Breast epithelium (tissue), 4 donors: ENCODE measurements at regions of chr18 and their contacts with region 1.

Region 1: DNA sequence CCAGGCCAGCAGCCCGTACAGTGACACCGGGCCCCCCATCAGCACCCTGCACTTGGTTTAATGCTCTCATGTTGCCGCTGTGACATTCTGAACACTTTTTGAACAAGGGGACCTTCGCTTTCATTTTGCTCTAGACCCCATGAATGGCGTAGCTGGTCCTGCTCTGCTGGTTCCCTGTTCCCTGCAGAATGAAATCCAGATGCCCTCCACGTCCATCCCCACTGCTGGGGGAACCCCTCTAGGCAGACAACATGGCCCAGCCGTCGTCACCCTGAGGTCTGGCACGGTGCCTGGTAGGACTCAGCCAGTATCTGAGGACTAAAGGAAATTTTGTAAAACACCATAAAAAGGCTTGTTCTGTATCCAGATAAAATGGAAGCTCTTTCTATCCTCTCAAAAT is 128.6 kb downstream of the KCTD1 start:
- DNase-seq: no peak
- H3K4me3 ChIP-seq: no peak overlapping the region
- H3K27ac ChIP-seq: no peak overlapping the region
- H3K4me1 ChIP-seq: no peaks in the 10 kb centered on the region
- H3K27me3 ChIP-seq: no peaks in the 10 kb centered on the region
- CTCF ChIP-seq: no peak
- POLR2A ChIP-seq: no peak

Region 2: DNA sequence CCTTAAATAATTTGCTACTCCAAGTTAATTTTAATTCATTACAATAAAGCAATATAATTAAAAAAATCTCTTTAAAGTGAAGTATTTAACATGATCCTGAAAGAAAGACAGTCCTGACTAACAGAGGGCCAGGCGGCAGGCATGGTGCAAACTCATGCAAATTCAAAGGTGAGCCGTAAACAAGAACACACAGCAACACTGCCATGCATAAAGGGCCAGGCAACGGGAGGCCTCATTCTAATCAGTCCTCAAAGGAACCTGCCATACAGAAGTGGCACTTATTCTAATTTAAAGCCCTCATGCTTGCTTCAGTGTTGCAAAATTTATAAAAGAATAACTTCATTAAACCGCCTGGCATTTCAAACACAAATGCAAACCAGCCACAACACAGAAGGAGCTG is 1344.8 kb before region 1 on chr18:
- intact Hi-C with region 1: loop called (anchors 5 kb)
- DNase-seq: no peak
- H3K4me3 ChIP-seq: no peak overlapping the region
- H3K27ac ChIP-seq: no peak overlapping the region
- H3K4me1 ChIP-seq: no peaks in the 10 kb centered on the region
- H3K27me3 ChIP-seq: no peaks in the 10 kb centered on the region
- CTCF ChIP-seq: no peak
- POLR2A ChIP-seq: no peak

Region 3: DNA sequence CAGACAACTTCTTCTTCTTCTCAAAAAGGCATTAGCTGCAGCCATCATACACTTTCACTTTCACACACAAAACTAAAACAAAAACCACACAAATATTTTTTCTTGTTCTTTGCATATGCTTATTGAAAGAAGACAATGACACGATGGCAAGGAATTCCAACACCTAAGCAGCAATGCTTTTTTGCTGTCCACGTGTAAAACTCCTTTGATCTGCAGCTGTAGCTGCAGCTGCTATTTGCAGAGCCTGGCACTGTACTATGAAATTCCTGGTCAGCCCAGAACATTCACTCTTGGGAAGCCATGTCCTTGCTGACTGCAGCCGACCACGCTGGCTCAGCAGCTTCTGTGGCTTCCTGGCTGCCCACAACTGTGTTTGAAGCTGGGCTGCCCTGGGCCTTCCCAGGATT is 1441.0 kb after region 1 on chr18:
- intact Hi-C with region 1: no loop called
- DNase-seq: no peak
- H3K4me3 ChIP-seq: no peak overlapping the region
- H3K27ac ChIP-seq: no peak overlapping the region
- H3K4me1 ChIP-seq: no peaks in the 10 kb centered on the region
- H3K27me3 ChIP-seq: no peaks in the 10 kb centered on the region
- CTCF ChIP-seq: no peak
- POLR2A ChIP-seq: no peak